T-cell (primary cell): ENCODE measurements at regions of chrX and their contacts with region 1.

Region 1: DNA sequence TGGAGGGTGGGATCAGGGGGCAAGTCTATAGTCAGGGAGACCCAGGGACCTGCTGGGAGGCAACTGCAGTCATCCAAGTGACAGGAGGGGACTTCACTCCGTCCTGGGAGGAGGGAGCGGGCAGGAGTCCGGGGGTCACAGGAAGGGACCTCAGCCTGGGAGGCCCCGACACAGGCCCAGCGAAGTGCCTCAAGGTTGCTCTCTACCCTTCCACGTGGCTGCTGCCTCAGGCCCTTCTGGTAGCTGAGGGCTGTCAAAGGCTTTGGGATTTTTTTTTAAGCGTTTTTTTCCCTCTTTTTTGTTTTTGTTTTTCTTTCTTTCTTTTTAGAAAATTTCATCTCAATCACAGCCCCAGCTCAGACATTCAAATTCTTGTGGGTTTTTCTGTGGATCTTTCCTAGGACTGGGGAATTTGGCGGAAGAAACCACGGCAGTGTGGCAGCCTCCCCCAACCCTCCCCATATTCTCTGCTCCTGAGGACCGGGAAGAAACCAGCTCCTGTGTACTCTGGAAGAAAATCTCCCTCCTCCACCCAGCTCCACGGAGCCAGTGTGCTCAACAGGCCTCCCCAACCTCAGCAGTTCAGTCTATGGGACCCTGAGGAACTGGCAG is 1.4 kb upstream of the HAUS7 start:
- DNase-seq: no peak
- ATAC-seq: no peak
- H3K4me3 ChIP-seq: no peak overlapping the region
- H3K4me3 Mint-ChIP-seq: peak overlapping the region in 1 of 3 donors; percentile 70
- H3K27ac ChIP-seq: peak overlapping the region; percentile 71
- H3K27ac Mint-ChIP-seq: no peak overlapping the region
- H3K4me1 ChIP-seq: peaks cover 4 to 43% of the 10 kb centered on the region in 2 experiments
- H3K4me1 Mint-ChIP-seq: peaks cover 12 to 30% (median 27%) of the 10 kb centered on the region in 3 donors
- H3K27me3 ChIP-seq: peaks cover 0 to 3% of the 10 kb centered on the region in 2 experiments
- H3K27me3 Mint-ChIP-seq: peaks cover 0 to 3% of the 10 kb centered on the region in 2 donors

Region 2: GRCh38 chrX:153370293-153371055 is 101.3 kb before region 1 on chrX:
- CTCF ChIA-PET with region 1: no interaction called
- POLR2A ChIA-PET with region 1: no interaction called
- DNase-seq: no peak
- ATAC-seq: no peak
- H3K4me3 ChIP-seq: no peak overlapping the region
- H3K4me3 Mint-ChIP-seq: no peak overlapping the region
- H3K27ac ChIP-seq: no peak overlapping the region
- H3K27ac Mint-ChIP-seq: no peak overlapping the region
- H3K4me1 ChIP-seq: no peaks in the 10 kb centered on the region
- H3K4me1 Mint-ChIP-seq: peaks cover 0 to 1% (median 0%) of the 10 kb centered on the region in 3 donors
- H3K27me3 ChIP-seq: no peaks in the 10 kb centered on the region
- H3K27me3 Mint-ChIP-seq: peaks cover 6 to 25% of the 10 kb centered on the region in 2 donors

Region 3: GRCh38 chrX:153488231-153488914 is 16.6 kb after region 1 on chrX:
- CTCF ChIA-PET with region 1: interaction called in 1 of 2 experiments, 10 read pairs
- POLR2A ChIA-PET with region 1: no interaction called
- DNase-seq: no peak
- ATAC-seq: no peak
- H3K4me3 ChIP-seq: no peak overlapping the region
- H3K4me3 Mint-ChIP-seq: no peak overlapping the region
- H3K27ac ChIP-seq: no peak overlapping the region
- H3K27ac Mint-ChIP-seq: no peak overlapping the region
- H3K4me1 ChIP-seq: no peaks in the 10 kb centered on the region
- H3K4me1 Mint-ChIP-seq: no peaks in the 10 kb centered on the region
- H3K27me3 ChIP-seq: no peaks in the 10 kb centered on the region
- H3K27me3 Mint-ChIP-seq: no peaks in the 10 kb centered on the region

Region 4: DNA sequence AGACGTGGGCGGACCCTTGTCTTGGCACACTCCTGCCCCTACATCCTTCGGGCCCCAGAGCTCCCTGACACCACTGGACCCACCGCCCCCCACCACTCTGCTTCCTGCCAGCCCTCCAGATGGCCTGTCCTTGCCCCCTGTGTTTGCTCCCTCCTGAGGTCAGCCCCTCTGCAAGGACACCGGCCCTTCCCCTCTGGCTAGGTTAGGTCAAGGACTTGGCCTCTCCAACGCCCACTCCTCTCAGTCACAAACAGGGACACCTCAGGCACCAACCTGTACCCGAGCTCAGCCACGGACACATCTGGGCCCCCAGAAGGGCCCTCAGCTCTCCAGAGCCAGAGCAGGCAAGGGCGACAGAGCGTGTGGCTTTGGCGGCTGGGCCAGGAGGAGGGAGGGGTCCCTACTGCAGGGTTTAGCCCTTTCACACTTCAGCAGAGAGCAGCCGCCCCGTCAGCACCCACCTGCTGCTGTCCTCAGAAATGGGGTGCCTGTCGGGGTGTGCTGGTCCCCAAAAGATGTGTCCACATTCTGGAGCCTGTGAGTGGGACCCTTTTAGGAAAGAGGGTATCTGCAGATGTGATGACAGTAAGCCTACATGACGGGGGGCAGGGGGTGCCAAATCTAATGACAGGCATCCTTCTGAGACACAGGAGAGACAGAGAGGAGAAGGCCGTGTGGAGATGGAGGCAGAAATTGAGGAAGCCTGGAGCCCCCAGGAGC is 151.7 kb after region 1 on chrX:
- CTCF ChIA-PET with region 1: no interaction called
- POLR2A ChIA-PET with region 1: no interaction called
- DNase-seq: no peak
- ATAC-seq: no peak
- H3K4me3 ChIP-seq: no peak overlapping the region
- H3K4me3 Mint-ChIP-seq: no peak overlapping the region
- H3K27ac ChIP-seq: no peak overlapping the region
- H3K27ac Mint-ChIP-seq: no peak overlapping the region
- H3K4me1 ChIP-seq: no peaks in the 10 kb centered on the region
- H3K4me1 Mint-ChIP-seq: no peaks in the 10 kb centered on the region
- H3K27me3 ChIP-seq: peaks cover 0 to 16% of the 10 kb centered on the region in 2 experiments
- H3K27me3 Mint-ChIP-seq: peaks cover 3 to 11% of the 10 kb centered on the region in 2 donors

Region 5: DNA sequence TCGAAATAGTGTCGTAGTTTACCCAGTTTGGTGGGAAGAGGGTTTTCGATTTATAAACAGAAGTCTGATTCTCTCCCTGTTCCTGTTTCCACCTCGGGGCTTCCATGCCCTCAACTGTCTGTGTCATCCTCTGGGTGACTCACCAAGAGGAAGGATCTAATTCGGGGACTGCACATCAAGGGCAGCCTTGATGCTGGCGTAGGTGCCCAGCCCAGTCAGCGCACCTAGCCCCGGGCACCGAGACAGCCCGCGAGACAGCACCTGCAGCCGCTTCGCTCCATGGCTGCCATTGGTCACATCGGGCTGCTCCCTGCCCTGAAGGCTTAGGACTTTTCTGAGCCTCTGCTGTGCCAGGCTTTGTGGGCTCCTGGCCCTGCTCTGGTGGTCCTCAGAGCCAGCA is 260.6 kb after region 1 on chrX:
- CTCF ChIA-PET with region 1: no interaction called
- POLR2A ChIA-PET with region 1: interaction called in 1 of 2 experiments, 10 read pairs
- DNase-seq: no peak
- ATAC-seq: no peak
- H3K4me3 ChIP-seq: no peak overlapping the region
- H3K4me3 Mint-ChIP-seq: no peak overlapping the region
- H3K27ac ChIP-seq: no peak overlapping the region
- H3K27ac Mint-ChIP-seq: peak overlapping the region in 1 of 2 donors; percentile 69
- H3K4me1 ChIP-seq: peaks cover 0 to 18% of the 10 kb centered on the region in 2 experiments
- H3K4me1 Mint-ChIP-seq: peaks cover 11 to 30% (median 18%) of the 10 kb centered on the region in 3 donors
- H3K27me3 ChIP-seq: no peaks in the 10 kb centered on the region
- H3K27me3 Mint-ChIP-seq: peaks cover 0 to 3% of the 10 kb centered on the region in 2 donors